Motor neuron (in vitro differentiated cells): ENCODE measurements at regions of chr6 and their contacts with region 1.

Region 1: DNA sequence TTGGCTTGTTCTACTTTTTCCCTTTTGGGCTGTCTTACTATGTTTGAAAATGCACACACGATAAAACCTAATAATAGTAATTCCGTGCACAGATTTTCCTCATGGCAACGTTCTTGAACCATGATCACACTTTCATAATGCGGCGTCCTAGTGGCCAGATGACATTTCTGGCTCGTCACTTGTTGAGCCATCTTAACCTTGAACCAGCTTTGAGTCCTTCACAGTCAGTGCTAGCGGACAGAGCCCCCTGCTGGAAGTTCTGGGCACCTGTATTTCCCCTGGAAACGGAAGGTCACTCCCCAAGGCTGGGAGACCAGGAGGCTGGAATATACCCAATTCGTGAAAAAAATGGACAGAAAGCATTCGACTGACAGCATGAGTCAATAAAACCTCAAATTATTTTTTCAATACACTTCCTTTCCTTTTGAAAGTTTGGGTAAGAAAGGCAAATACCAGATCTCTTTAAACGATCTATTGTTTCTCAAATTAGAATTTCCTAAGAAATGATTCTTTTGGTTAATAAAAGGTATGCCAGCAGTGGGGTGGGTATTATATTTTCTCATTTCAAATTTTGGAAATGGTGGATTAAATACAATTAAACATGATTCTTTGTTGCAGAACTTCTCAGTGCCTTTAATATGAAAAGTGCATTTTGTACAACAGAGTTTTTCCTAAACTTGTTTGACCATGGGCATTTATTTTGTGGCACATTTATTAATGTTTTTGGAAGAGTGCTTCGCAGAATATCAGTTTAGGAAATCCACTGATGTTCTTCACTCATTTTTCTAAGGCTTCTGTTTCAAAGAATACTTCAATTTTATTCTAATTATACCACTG is 542.3 kb downstream of the QKI start:
- ATAC-seq: peak in 5 of 8 experiments; percentile 46 to 85 (median 60)
- H3K4me3 ChIP-seq: no peak overlapping the region
- H3K27ac ChIP-seq: no peak overlapping the region
- H3K4me1 ChIP-seq: peaks cover 15 to 28% of the 10 kb centered on the region in 2 donors

Region 2: GRCh38 chr6:163460307-163460782 is 496.4 kb before region 1 on chr6:
- in situ Hi-C with region 1: loop called in 1 of 9 experiments (anchors 25 kb)
- ATAC-seq: peak in 4 of 8 experiments; percentile 15 to 90 (median 87)
- H3K4me3 ChIP-seq: no peak overlapping the region
- H3K27ac ChIP-seq: no peak overlapping the region
- H3K4me1 ChIP-seq: peaks cover 2 to 11% of the 10 kb centered on the region in 2 donors

Region 3: DNA sequence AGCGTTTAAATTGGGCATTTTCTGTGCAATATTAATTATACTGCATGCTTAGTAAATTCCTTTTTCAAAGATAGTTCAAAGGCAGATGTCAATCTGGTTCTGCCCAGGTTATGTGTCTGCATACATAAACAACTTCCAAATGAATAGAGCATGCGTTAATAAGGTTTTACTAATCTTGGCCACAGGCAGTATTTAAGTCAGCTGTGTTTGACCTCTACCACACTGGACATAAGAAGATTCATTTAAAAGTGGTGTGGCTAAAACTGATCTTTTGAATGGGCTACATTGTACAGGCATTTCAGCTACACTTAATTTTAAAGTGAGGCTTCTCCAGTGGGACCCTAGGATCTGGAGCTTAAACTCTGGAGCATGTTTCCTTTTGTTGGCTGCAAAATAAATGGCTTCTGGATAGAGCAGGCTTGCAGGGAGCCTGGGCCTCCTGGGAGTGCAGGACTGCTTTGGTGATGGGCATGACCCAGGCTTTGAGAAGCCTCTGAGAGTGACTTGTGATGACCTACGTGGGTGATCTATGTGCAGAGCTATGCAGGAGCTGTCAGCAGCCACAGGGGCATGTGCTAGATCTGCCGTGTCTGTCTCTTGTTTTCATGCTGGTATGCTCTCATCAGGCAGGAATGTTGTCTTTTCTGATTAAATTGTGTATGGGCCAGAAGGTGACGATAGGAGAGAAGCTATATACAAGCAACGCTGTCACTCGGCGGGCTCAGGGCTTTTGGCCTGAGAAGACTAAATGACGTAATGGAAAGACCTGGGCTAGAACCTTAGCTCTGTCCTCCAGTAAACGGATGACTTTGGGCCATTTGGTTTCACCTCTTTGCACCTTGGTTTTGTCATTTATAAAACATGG is 211.0 kb before region 1 on chr6:
- in situ Hi-C with region 1: no loop called
- ATAC-seq: peak; percentile 91 to 99 (median 98)
- H3K4me3 ChIP-seq: no peak overlapping the region
- H3K27ac ChIP-seq: peak overlapping the region; percentile 34 to 61
- H3K4me1 ChIP-seq: peaks cover 28% of the 10 kb centered on the region in 2 donors